ENCODE measurements at regions of chr6 and their contacts with region 1.

Region 1: DNA sequence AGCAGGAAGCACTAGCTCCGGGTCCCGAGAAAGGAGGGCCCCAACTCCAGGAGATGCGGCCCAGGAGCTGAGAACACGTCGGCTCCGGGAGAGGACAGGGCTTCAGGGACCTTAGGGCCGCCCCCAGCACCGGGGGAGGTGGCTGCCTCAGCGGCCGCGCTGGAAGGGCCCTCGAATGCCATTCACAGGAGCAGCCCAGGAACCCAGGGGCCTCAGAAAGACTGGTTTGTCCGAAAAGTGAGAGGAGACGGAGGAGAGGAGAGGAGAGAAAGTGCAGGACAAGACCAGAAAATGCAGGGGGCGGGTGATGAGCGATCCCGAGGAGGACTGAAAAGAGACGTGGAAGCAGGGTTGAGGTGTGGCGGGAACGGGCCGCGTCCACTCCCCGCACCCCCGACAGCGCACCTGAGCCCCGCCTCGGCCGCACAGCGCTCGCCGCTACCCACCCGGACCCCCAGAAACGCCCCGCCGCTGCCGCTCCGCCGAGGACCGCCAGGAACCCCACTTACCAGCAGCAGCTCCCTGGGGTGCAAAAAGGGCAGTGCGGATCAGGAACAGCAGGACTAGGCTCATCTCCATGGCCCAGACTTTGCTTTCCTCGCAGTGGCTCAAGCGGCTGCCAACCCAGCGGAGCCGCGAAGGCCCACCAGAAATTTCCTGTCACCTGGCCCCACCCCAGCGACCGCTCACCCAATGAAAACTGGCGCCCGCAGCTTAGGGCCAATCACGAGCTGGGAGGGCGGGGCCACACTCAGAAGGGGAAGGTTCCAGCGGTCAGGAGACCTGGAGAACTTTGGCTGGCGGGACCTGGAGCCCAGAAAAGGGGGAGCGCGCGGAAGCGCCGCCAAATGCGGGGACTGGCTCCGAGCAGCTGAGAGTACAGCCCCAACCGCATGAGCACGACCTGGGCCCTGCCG is 25.4 kb downstream of the HLA-F start:
- DNase-seq: peak; percentile 59
- H3K4me3 ChIP-seq: peak overlapping the region; percentile 70
- H3K27ac ChIP-seq: no peak overlapping the region
- H3K27me3 ChIP-seq: peaks cover 2% of the 10 kb centered on the region
- CTCF ChIP-seq: no peak

Region 2: DNA sequence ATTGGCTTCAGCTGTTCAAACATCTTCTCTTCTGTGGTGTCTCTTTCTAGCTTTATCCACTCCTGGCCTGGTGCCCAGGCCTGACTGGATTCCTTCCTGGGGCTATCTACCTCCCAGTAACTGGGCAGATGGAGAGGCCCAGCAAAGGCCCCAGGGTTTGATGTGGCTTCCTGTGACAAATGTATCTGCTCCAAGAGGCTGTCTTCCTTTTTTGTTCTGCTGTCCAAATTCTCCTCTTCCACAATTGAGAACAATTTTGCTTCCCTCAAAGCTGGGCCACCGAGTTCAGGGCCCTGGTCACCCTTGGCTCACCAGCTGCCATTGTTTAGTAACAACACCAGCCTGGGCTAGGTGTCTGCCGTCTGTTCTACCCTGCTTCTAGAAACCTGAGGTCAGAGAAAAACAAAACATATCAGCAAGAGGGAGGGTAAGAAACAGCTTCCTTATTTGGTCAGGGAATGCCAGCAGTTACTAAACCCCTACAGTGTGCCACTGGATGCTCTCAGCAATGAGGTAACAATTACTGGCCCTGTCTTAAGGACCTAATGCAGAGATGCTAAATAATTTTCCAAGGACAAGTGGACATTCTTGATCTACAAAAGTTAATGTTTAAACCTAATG is 71.6 kb before region 1 on chr6:
- in situ Hi-C with region 1: no loop called
- DNase-seq: no peak
- H3K4me3 ChIP-seq: no peak overlapping the region
- H3K27ac ChIP-seq: no peak overlapping the region
- H3K27me3 ChIP-seq: no peaks in the 10 kb centered on the region
- CTCF ChIP-seq: no peak

Region 3: GRCh38 chr6:29847871-29848630 is 99.4 kb after region 1 on chr6:
- in situ Hi-C with region 1: loop called (anchors 25 kb)
- DNase-seq: peak; percentile 38
- H3K4me3 ChIP-seq: no peak overlapping the region
- H3K27ac ChIP-seq: no peak overlapping the region
- H3K27me3 ChIP-seq: peaks cover 8% of the 10 kb centered on the region
- CTCF ChIP-seq: peak; percentile 96

Measured in brain microvascular endothelial cell (primary cell).